ENCODE measurements at regions of chr2 and their contacts with region 1.

Region 1: GRCh38 chr2:224284134-224284946 is 117.6 kb downstream of the FAM124B start:
- DNase-seq: peak in 4 of 9 experiments; percentile 1 to 47 (median 36)
- ATAC-seq: no peak
- H3K4me3 ChIP-seq: no peak overlapping the region
- H3K4me3 Mint-ChIP-seq: no peak overlapping the region
- H3K27ac ChIP-seq: no peak overlapping the region
- H3K27ac Mint-ChIP-seq: no peak overlapping the region
- H3K4me1 ChIP-seq: no peaks in the 10 kb centered on the region
- H3K4me1 Mint-ChIP-seq: no peaks in the 10 kb centered on the region
- H3K27me3 ChIP-seq: peaks cover 0 to 4% of the 10 kb centered on the region in 2 experiments
- H3K27me3 Mint-ChIP-seq: peaks cover 23% of the 10 kb centered on the region
- CTCF ChIP-seq: peak; percentile 62

Region 2: GRCh38 chr2:222969491-222969890 is 1314.8 kb before region 1 on chr2:
- CTCF ChIA-PET with region 1: interaction called, 6 read pairs
- POLR2A ChIA-PET with region 1: no interaction called
- intact Hi-C with region 1: loop called in 1 of 2 experiments (anchors 2 kb)
- DNase-seq: no peak
- ATAC-seq: no peak
- H3K4me3 ChIP-seq: no peak overlapping the region
- H3K4me3 Mint-ChIP-seq: no peak overlapping the region
- H3K27ac ChIP-seq: no peak overlapping the region
- H3K27ac Mint-ChIP-seq: no peak overlapping the region
- H3K4me1 ChIP-seq: no peaks in the 10 kb centered on the region
- H3K4me1 Mint-ChIP-seq: no peaks in the 10 kb centered on the region
- H3K27me3 ChIP-seq: no peaks in the 10 kb centered on the region
- H3K27me3 Mint-ChIP-seq: peaks cover 4% of the 10 kb centered on the region
- CTCF ChIP-seq: no peak

Region 3: GRCh38 chr2:223727562-223727961 is 556.8 kb before region 1 on chr2:
- CTCF ChIA-PET with region 1: interaction called, 3 read pairs
- POLR2A ChIA-PET with region 1: no interaction called
- intact Hi-C with region 1: loop called in 1 of 2 experiments (anchors 2 kb)
- DNase-seq: peak in 7 of 9 experiments; percentile 1 to 73 (median 19)
- ATAC-seq: no peak
- H3K4me3 ChIP-seq: no peak overlapping the region
- H3K4me3 Mint-ChIP-seq: no peak overlapping the region
- H3K27ac ChIP-seq: no peak overlapping the region
- H3K27ac Mint-ChIP-seq: no peak overlapping the region
- H3K4me1 ChIP-seq: no peaks in the 10 kb centered on the region
- H3K4me1 Mint-ChIP-seq: no peaks in the 10 kb centered on the region
- H3K27me3 ChIP-seq: no peaks in the 10 kb centered on the region
- H3K27me3 Mint-ChIP-seq: peaks cover 16% of the 10 kb centered on the region
- CTCF ChIP-seq: peak; percentile 37

Region 4: GRCh38 chr2:223970343-223971128 is 313.8 kb before region 1 on chr2:
- CTCF ChIA-PET with region 1: interaction called, 92 read pairs
- POLR2A ChIA-PET with region 1: no interaction called
- intact Hi-C with region 1: loop called (anchors 1 kb)
- DNase-seq: peak; percentile 16 to 75 (median 55)
- ATAC-seq: peak; percentile 72
- H3K4me3 ChIP-seq: no peak overlapping the region
- H3K4me3 Mint-ChIP-seq: no peak overlapping the region
- H3K27ac ChIP-seq: no peak overlapping the region
- H3K27ac Mint-ChIP-seq: no peak overlapping the region
- H3K4me1 ChIP-seq: no peaks in the 10 kb centered on the region
- H3K4me1 Mint-ChIP-seq: peaks cover 4% of the 10 kb centered on the region
- H3K27me3 ChIP-seq: no peaks in the 10 kb centered on the region
- H3K27me3 Mint-ChIP-seq: no peaks in the 10 kb centered on the region
- CTCF ChIP-seq: peak; percentile 96

Region 5: DNA sequence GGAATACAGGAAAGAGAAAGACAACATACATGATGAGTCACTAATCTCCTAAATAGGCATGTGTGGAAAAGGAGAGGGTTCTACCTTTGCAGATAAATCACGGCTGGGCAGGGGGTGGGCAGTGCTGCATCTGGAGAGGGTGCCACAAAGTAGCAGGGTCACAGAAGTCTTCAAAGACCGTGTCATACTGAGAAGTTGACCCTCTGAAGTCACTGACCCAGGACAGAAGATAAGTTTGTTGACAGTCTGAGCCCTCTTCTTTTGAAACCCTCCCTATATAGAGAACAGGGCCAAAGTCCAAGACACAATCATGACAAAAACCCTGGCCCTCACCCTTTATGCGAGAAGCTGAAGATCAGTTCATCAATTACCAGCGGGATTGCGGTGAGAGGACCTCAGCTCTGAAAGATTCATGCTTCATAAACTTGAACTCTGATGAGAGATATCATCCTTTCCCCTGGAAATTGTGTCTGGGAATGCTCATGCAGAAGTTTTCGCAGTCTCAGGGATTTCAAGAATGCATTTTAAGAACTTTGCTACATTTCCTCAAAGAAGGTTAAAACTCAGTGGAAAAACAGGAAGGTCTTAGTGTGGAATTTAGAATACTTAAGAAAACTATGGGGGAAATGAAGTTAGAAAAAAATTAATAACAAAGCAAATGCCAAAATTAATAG is 12.0 kb before region 1 on chr2:
- CTCF ChIA-PET with region 1: interaction called, 12 read pairs
- POLR2A ChIA-PET with region 1: no interaction called
- intact Hi-C with region 1: no loop called
- DNase-seq: no peak
- ATAC-seq: no peak
- H3K4me3 ChIP-seq: no peak overlapping the region
- H3K4me3 Mint-ChIP-seq: no peak overlapping the region
- H3K27ac ChIP-seq: no peak overlapping the region
- H3K27ac Mint-ChIP-seq: no peak overlapping the region
- H3K4me1 ChIP-seq: no peaks in the 10 kb centered on the region
- H3K4me1 Mint-ChIP-seq: no peaks in the 10 kb centered on the region
- H3K27me3 ChIP-seq: no peaks in the 10 kb centered on the region
- H3K27me3 Mint-ChIP-seq: peaks cover 1% of the 10 kb centered on the region
- CTCF ChIP-seq: no peak

Region 6: DNA sequence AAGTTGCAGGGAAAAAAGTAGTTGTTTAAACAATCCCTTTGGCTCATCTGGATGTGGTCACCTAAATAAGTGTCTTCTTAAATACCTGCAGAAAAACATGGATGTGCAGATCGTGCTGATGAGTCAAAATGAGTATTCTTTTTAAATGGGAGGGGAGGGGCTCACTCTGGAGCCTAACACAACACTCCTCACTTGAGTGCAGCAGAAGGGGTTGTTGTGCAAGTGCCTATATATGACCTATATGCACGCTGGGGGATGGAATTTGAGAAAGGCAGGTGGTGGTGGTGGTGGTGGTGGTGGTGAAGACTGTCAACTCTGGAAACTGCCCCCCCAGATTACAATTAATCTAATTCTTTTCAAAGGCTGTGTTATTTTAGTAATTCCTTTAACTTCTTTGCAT is 195.5 kb after region 1 on chr2:
- CTCF ChIA-PET with region 1: no interaction called
- POLR2A ChIA-PET with region 1: no interaction called
- intact Hi-C with region 1: no loop called
- DNase-seq: no peak
- ATAC-seq: no peak
- H3K4me3 ChIP-seq: no peak overlapping the region
- H3K4me3 Mint-ChIP-seq: no peak overlapping the region
- H3K27ac ChIP-seq: no peak overlapping the region
- H3K27ac Mint-ChIP-seq: no peak overlapping the region
- H3K4me1 ChIP-seq: peaks cover 5% of the 10 kb centered on the region
- H3K4me1 Mint-ChIP-seq: peaks cover 6% of the 10 kb centered on the region
- H3K27me3 ChIP-seq: no peaks in the 10 kb centered on the region
- H3K27me3 Mint-ChIP-seq: no peaks in the 10 kb centered on the region
- CTCF ChIP-seq: no peak

Measured in CD8-positive, alpha-beta T cell (primary cell).